Right ventricle myocardium superior (tissue), 1 donor: ENCODE measurements at regions of chr17 and their contacts with region 1.

Region 1: GRCh38 chr17:61927200-61928165 is at the start of gene INTS2:
- DNase-seq: peak; percentile 98
- ATAC-seq: peak; percentile 100
- total RNA-seq, gene INTS2: 8.7 TPM

Region 2: DNA sequence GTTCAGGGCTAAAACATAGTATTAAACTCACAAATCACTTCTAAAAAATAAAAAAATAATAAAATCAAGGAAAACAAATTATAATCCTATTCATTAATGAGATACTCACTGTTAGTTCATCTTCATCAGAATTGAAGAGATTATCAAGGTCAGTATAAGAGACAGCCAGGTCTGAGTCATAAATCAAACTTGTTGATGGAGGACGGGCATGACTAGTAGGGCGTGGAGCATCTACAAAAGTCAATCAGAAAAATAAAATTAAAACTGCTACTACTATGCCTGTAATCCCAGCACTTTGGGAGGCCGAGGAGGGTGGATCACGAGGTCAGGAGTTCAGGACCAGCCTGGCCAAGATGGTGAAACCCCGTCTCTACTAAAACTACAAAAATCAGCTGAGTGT is 59.4 kb after region 1 on chr17:
- intact Hi-C with region 1: no loop called
- DNase-seq: no peak
- ATAC-seq: no peak

Region 3: DNA sequence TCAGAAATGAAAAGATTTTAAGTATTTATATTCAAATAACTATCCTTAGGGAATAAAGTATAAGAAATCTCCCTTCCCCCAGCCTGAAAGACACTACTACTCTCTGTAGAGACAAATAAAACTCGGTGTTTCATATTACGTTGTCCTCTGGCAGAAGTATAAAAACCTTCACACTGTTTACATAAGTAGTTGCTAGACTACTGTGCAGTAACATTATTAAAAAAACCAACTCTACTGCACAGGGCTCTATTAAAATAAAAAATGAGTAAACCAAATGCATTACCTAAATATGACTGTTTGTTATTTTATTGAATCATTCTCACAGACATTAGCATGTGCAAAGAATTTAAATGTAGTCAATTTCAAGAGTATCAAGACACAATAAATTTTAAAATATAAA is 70.2 kb after region 1 on chr17:
- intact Hi-C with region 1: no loop called
- DNase-seq: no peak
- ATAC-seq: peak; percentile 96

Region 4: GRCh38 chr17:62017610-62018261 is 90.3 kb after region 1 on chr17:
- intact Hi-C with region 1: no loop called
- DNase-seq: no peak
- ATAC-seq: no peak

Region 5: GRCh38 chr17:62065598-62066468 is 138.3 kb after region 1 on chr17:
- intact Hi-C with region 1: loop called (anchors 5 kb)
- DNase-seq: peak; percentile 99
- ATAC-seq: peak; percentile 99